SK-N-SH (cell line): ENCODE measurements at regions of chr4 and their contacts with region 1.

Region 1: DNA sequence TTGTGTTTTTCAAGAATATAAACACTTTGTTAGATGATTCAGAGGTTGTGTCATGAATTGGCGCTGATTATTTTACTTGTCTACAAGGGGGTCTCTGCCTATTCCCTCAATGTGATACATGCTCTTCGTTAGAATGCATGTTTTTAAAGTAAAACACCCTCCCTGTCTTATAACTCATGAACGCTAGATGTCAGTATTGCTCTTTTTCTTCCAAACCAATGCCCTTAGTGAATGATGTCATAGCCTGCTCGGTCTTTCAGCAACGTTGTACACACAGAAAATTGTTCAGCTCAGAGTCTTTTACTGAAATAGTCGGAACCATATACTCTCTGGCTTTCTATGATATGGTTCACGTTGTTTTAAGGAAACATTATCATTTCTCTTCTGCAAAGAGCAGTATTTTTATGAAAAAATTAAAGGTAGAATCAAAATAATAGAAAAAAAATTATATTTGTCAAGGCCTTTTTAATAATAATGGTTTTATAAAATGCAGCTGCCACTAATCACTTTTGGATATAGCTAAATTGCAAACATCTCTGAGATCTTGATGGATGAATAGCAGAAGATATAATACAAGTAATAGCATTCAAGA is 292.9 kb downstream of the TLL1 start:
- DNase-seq: peak; percentile 37
- H3K4me3 ChIP-seq: no peak overlapping the region; a peak in 1 of 4 replicates
- H3K27ac ChIP-seq: no peak overlapping the region
- H3K4me1 ChIP-seq: no peaks in the 10 kb centered on the region
- H3K27me3 ChIP-seq: no peaks in the 10 kb centered on the region
- CTCF ChIP-seq: peak; percentile 88
- EP300 ChIP-seq: no peak
- RAD21 ChIP-seq: peak; percentile 93

Region 2: DNA sequence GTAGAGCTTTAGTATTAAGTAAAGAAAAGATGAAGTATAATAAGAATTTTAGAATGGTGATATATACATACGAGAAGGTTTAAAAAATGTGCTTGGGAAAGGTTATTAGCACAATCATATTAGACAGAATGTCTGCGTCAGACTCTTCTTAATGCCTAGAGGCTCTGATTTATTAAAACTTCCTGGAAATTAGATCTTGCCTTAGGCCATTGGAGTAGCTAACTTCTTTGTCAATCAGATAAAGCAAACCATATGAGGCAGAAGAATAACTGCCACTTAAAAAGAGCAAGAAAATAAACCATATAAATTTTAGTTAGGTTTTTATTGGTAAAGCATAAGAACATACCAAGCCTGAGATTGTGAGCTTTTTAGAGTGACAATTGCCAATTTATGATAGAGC is 16.2 kb after region 1 on chr4:
- CTCF ChIA-PET with region 1: interaction called, 19 read pairs
- POLR2A ChIA-PET with region 1: no interaction called
- DNase-seq: no peak
- H3K4me3 ChIP-seq: no peak overlapping the region
- H3K27ac ChIP-seq: no peak overlapping the region
- H3K4me1 ChIP-seq: no peaks in the 10 kb centered on the region
- H3K27me3 ChIP-seq: no peaks in the 10 kb centered on the region
- CTCF ChIP-seq: no peak
- EP300 ChIP-seq: no peak
- RAD21 ChIP-seq: no peak

Region 3: DNA sequence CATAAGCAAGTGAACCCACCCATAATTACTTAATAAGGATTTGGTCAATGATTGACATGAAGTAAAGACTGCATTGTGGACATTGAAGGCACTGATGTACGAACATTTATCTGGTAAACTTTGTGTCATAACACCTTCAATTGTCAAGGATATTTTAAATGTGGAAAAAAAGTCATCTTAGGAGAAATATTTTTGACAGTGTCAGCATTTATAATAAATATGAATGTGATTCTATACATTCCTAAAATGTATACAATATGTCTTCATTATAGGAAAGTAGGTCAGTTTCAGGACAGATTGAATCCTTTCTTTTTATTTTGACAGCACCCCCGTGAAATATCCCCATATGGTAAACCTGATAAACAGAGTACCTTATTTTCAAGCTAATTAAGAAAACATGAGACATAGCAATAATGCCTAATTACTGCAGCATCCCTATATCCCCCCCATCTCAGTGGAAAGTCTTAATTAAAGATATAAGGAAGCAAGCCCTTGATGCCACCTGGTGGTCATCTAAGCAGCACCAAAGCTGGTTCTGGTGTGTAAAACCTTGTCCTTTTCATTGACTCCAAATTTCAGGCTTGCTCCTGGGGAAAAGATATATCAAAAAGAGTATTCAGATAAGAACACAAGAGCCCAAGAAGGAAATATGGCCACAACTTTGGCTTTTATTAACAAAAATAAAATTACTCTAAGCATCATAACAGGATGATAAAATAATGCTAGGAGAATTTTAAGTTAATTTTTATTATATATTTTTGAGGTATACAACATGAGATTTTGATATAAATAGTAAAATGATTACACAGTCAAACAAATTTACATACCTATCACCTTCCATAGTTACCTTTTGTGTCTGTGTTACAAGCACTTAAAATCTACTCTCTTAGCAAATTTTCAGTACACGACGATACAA is 86.8 kb after region 1 on chr4:
- CTCF ChIA-PET with region 1: interaction called, 14 read pairs
- POLR2A ChIA-PET with region 1: no interaction called
- DNase-seq: peak; percentile 3
- H3K4me3 ChIP-seq: no peak overlapping the region; a peak in 1 of 4 replicates
- H3K27ac ChIP-seq: no peak overlapping the region
- H3K4me1 ChIP-seq: no peaks in the 10 kb centered on the region
- H3K27me3 ChIP-seq: no peaks in the 10 kb centered on the region
- CTCF ChIP-seq: peak; percentile 57
- EP300 ChIP-seq: no peak
- RAD21 ChIP-seq: peak; percentile 50

Region 4: DNA sequence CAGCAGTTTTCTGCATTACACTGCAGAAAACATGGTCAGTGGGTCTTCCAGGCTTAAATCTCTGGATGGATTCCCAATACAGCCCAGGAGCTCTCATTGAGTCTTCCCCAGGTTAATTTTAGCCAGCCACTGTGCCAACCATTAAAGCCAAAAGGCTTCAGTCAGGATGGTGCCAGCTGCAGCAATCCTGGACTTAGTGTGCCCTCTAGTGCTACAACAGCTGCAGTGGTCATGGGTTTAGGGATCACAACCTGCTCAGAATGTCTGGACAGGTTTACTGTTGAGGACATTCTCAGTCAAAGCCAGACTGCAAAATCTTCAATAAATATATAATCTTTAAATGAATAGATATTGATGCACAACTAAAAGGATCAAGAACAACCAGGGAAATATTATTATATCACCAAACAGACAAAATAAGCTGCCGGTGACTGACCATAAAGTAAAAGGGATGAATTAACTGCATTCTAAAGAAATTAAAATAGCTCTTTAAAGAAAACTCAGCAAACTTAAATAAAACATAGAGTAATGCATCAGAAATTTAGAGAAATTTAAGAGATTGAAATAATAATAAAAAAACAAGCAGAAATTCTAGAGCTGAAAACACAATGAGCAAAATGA is 428.5 kb after region 1 on chr4:
- CTCF ChIA-PET with region 1: interaction called, 32 read pairs
- POLR2A ChIA-PET with region 1: no interaction called
- DNase-seq: peak; percentile 41
- H3K4me3 ChIP-seq: no peak overlapping the region; a peak in 1 of 4 replicates
- H3K27ac ChIP-seq: no peak overlapping the region
- H3K4me1 ChIP-seq: no peaks in the 10 kb centered on the region
- H3K27me3 ChIP-seq: no peaks in the 10 kb centered on the region
- CTCF ChIP-seq: peak; percentile 83
- EP300 ChIP-seq: no peak
- RAD21 ChIP-seq: peak; percentile 86